GM10248 (cell line): ENCODE measurements at regions of chr1 and their contacts with region 1.

Region 1: GRCh38 chr1:46036894-46037839 is 95.3 kb downstream of the PIK3R3 start:
- DNase-seq: peak; percentile 85
- CTCF ChIP-seq: peak; percentile 99

Region 2: DNA sequence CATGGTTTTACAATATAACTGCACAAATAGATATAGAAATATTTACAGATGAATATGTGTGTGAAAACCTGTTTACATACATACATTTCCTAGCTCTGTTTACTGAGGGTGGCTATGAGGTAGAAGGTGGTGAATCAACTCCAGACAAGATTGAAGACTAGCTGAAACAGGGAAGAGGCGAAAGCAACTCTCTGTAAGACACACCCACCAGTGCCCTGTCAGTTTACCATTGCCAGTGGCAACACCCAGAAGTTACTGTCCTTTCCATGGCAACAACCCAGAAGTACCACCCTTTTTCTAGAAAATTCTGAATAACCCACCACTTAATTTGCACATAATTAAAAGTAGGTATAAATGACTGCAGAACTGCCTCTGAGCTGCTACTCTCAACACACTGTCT is 332.5 kb before region 1 on chr1:
- CTCF ChIA-PET with region 1: no interaction called
- POLR2A ChIA-PET with region 1: no interaction called
- DNase-seq: no peak
- CTCF ChIP-seq: no peak

Region 3: GRCh38 chr1:46166521-46167462 is 129.6 kb after region 1 on chr1:
- CTCF ChIA-PET with region 1: interaction called, 256 read pairs
- POLR2A ChIA-PET with region 1: no interaction called
- DNase-seq: peak; percentile 50
- CTCF ChIP-seq: no peak

Region 4: GRCh38 chr1:46179138-46180081 is 142.2 kb after region 1 on chr1:
- CTCF ChIA-PET with region 1: interaction called, 256 read pairs
- POLR2A ChIA-PET with region 1: no interaction called
- DNase-seq: peak; percentile 78
- CTCF ChIP-seq: peak; percentile 85

Region 5: DNA sequence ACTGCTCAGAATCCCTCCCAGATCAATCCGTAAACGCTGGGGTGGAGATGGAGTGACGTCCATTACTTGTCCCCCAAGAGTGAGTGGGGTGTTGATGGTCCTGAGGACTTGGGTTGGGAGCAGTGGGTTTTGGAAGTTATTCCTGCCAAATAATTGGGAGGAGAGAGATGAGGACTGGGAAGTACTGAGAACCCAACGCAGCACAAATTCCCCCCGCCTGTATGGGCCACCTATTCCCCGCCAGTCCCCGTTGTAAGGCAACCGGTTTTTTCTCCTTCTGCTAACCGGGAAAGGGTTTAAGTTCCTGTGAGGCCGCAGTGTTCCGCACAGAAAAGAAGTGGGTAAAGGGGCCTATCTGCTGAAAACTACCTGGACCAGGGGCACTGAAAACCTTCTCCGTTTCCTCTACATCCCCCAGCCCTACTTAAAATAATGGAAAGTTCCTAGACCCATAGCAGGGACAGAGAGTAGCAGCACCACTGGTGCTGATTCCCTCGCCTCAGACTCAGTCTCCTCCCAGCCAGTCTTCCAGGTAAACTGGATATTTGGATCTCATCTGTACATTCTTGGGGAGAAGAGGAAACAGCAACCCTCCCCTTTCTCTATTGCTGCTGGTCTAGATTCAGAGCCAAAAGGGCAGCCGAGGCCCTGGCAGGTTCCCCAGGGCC is 166.7 kb after region 1 on chr1:
- CTCF ChIA-PET with region 1: interaction called, 10 read pairs
- POLR2A ChIA-PET with region 1: no interaction called
- DNase-seq: no peak
- CTCF ChIP-seq: no peak